OCI-LY7 (cell line): ENCODE measurements at regions of chr6 and their contacts with region 1.

Region 1: GRCh38 chr6:33147807-33148666 is 44.2 kb downstream of the COL11A2 start:
- DNase-seq: peak; percentile 45
- H3K4me3 ChIP-seq: no peak overlapping the region
- H3K27ac ChIP-seq: no peak overlapping the region
- H3K4me1 ChIP-seq: no peaks in the 10 kb centered on the region
- CTCF ChIP-seq: peak; percentile 98

Region 2: DNA sequence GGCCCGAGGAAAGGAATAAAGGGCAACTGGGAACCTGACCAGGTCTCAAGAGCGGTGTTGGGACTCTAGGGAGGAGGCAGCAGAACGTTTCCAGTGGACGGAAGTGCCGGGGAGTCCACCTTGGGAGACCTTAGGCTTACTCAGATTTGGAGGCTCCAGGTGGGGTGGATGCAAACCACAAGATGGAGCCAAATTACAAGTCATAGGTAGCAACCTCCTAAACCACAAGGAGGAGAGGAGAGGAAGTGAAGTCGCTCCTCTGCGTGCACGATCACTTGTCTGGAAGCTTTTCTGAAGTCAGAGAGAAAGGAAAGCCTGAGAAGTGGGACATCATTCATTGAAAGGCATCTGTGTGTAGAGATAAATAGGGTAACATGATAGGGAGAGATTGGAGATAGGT is 148.0 kb before region 1 on chr6:
- CTCF ChIA-PET with region 1: no interaction called
- POLR2A ChIA-PET with region 1: no interaction called
- intact Hi-C with region 1: loop called (anchors 1 kb)
- DNase-seq: peak; percentile 77
- H3K4me3 ChIP-seq: no peak overlapping the region
- H3K27ac ChIP-seq: no peak overlapping the region
- H3K4me1 ChIP-seq: peaks cover 7% of the 10 kb centered on the region
- CTCF ChIP-seq: peak; percentile 85

Region 3: GRCh38 chr6:33118525-33119123 is 29.4 kb before region 1 on chr6:
- CTCF ChIA-PET with region 1: no interaction called
- POLR2A ChIA-PET with region 1: no interaction called
- intact Hi-C with region 1: no loop called
- DNase-seq: peak; percentile 78
- H3K4me3 ChIP-seq: no peak overlapping the region
- H3K27ac ChIP-seq: no peak overlapping the region
- H3K4me1 ChIP-seq: peaks cover 25% of the 10 kb centered on the region
- CTCF ChIP-seq: peak; percentile 94

Region 4: DNA sequence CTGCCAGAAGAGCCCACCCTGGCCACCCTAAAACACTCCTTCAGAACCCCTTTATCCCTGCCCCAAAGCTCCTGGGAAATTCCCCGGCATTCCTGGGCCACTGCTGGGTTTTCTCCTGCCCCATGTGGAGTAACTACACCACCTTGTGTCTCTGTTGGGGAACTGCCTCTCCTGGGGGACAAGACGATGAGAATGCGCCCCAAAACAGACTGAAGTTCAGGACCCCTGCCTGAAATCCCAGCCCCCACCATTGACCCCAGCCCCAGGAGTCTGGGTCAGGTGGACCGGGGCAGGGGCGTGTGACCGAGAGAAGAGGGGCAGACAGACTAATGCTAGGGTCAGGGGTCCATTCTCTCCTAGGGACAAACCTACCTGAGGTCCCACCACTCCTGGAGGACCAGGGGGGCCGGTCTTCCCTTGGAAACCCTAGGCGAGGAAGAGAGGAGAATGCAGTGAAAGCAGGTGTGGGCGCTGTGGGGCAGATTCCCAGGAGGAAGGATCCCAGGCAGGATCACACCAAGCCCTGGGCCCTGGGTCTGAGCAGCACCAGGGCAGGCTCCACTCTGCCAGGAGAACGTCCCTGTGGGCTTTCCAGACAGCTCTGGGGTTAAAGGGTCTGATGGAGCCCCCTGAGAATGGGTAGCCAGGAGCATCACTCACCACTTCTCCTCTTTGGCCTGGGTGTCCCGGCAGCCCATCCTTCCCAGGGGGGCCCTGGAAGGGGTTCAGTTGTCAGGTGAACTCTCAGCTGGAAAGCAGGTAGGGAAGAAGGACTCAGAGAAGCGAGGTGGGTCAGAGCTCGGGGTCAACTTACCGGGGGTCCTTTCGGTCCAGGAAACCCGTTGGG is 24.9 kb after region 1 on chr6:
- CTCF ChIA-PET with region 1: no interaction called
- POLR2A ChIA-PET with region 1: no interaction called
- intact Hi-C with region 1: no loop called
- DNase-seq: peak; percentile 35
- H3K4me3 ChIP-seq: no peak overlapping the region
- H3K27ac ChIP-seq: no peak overlapping the region
- H3K4me1 ChIP-seq: peaks cover 4% of the 10 kb centered on the region
- CTCF ChIP-seq: peak; percentile 79

Region 5: DNA sequence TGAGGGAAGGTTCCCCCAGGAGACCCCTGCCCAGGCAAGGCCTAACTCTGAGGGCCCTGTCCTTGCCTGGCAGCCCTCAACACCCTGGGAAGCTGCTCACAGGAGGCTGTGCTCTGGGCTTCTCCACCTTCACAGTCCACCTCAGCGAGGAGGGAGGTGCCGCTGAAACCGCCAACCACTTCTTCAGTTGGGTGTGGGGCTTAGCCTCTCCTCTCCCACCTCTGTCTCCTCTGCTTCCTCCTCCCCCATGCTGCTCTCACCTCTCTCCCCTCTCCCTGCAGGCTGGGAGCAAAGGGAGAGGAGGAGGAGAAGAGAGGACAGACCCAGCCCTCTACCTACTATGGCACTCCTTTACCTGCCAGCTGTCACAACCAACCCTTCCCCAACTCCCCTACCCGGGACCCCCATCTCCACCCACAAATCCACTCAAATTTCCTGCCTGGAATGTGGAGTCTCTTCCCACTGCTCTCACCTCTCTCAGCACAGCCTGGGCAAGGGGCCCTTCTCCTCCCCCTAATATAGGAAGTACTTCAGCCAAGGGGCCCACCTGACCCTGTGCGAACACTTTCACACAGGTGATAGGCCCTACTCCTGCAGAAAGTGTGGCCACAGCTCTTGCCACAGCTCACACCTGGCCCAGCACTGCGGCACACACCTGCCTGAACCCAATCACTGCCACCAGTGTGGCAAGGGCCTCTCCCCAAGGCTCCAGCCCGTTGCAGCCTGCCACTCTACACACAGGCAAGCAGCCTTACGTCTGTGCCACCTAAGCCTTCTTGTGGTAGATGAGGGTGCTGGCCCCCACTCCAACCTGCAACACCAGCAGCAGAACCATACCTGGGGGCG is 67.5 kb after region 1 on chr6:
- CTCF ChIA-PET with region 1: no interaction called
- POLR2A ChIA-PET with region 1: no interaction called
- intact Hi-C with region 1: loop called (anchors 5 kb)
- DNase-seq: no peak
- H3K4me3 ChIP-seq: no peak overlapping the region
- H3K27ac ChIP-seq: no peak overlapping the region
- H3K4me1 ChIP-seq: peaks cover 10% of the 10 kb centered on the region
- CTCF ChIP-seq: no peak

Region 6: GRCh38 chr6:33372526-33373123 is 224.6 kb after region 1 on chr6:
- CTCF ChIA-PET with region 1: no interaction called
- POLR2A ChIA-PET with region 1: no interaction called
- intact Hi-C with region 1: no loop called
- DNase-seq: no peak
- H3K4me3 ChIP-seq: no peak overlapping the region
- H3K27ac ChIP-seq: no peak overlapping the region
- H3K4me1 ChIP-seq: peaks cover 10% of the 10 kb centered on the region
- CTCF ChIP-seq: no peak